WTC11 (cell line): ENCODE measurements at regions of chr15 and their contacts with region 1.

Region 1: DNA sequence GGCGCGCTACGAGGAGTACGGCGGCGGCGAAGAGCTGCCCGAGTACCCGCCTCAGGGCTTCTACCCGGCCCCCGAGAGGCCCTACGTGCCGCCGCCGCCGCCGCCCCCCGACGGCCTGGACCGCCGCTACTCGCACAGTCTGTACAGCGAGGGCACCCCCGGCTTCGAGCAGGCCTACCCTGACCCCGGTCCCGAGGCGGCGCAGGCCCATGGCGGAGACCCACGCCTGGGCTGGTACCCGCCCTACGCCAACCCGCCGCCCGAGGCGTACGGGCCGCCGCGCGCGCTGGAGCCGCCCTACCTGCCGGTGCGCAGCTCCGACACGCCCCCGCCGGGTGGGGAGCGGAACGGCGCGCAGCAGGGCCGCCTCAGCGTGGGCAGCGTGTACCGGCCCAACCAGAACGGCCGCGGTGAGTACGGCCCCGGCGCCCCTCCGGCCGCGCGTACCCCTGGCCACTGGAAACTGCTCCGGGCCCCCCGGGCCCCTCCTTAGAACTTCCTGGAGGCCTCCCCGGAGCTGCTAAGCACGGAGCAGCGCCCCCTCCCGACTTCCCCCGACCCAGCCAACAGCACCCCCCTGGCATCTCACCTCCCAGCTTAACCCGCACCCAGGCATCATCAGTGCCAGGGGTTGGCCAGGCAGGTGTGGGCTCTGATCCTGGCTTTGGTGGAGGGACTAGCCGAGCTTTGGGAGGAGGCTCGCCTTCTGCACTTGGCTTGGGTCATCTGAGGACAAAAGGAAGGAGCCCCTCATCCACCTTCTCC is 1.4 kb downstream of the LOXL1 start:
- DNase-seq: peak; percentile 74
- ATAC-seq: peak; percentile 38
- H3K4me3 Mint-ChIP-seq: peak overlapping the region; percentile 68
- H3K27ac Mint-ChIP-seq: no peak overlapping the region
- H3K4me1 Mint-ChIP-seq: peaks cover 43% of the 10 kb centered on the region
- H3K27me3 Mint-ChIP-seq: peaks cover 11% of the 10 kb centered on the region
- CTCF ChIP-seq: peak; percentile 33; the same call in 1 of the 2 replicates

Region 2: GRCh38 chr15:73897441-73898261 is 30.0 kb before region 1 on chr15:
- CTCF ChIA-PET with region 1: interaction called, 43 read pairs
- POLR2A ChIA-PET with region 1: interaction called, 3 read pairs
- DNase-seq: peak; percentile 78
- ATAC-seq: peak; percentile 92
- H3K4me3 Mint-ChIP-seq: no peak overlapping the region
- H3K27ac Mint-ChIP-seq: no peak overlapping the region
- H3K4me1 Mint-ChIP-seq: peaks cover 14% of the 10 kb centered on the region
- H3K27me3 Mint-ChIP-seq: no peaks in the 10 kb centered on the region
- CTCF ChIP-seq: peak; percentile 99

Region 3: GRCh38 chr15:73908030-73908821 is 19.4 kb before region 1 on chr15:
- CTCF ChIA-PET with region 1: interaction called, 20 read pairs
- POLR2A ChIA-PET with region 1: no interaction called
- DNase-seq: peak; percentile 95
- ATAC-seq: peak; percentile 99
- H3K4me3 Mint-ChIP-seq: no peak overlapping the region
- H3K27ac Mint-ChIP-seq: no peak overlapping the region
- H3K4me1 Mint-ChIP-seq: peaks cover 5% of the 10 kb centered on the region
- H3K27me3 Mint-ChIP-seq: peaks cover 7% of the 10 kb centered on the region
- CTCF ChIP-seq: peak; percentile 86

Region 4: DNA sequence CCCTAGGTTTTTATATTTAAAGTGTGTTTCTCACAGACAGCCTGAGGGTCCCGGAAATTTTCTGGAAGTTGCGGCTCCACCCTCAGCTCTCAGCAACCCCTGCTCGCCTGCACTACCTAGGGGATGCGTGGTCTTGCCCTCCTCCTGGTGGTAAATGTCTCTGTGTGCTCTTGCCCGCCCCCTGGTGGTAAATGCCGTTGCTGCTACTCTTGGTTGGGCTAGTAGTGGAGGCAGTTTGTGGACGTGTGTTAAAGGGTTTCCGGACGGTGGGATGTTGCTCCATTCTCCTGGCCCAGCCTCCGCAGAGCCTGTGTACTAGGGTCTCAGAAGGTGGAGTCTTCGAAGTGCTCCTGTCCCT is 37.1 kb after region 1 on chr15:
- CTCF ChIA-PET with region 1: interaction called, 17 read pairs
- POLR2A ChIA-PET with region 1: no interaction called
- DNase-seq: peak; percentile 94
- ATAC-seq: peak; percentile 96
- H3K4me3 Mint-ChIP-seq: peak overlapping the region; percentile 50
- H3K27ac Mint-ChIP-seq: no peak overlapping the region
- H3K4me1 Mint-ChIP-seq: peaks cover 27% of the 10 kb centered on the region
- H3K27me3 Mint-ChIP-seq: no peaks in the 10 kb centered on the region
- CTCF ChIP-seq: peak; percentile 91

Region 5: DNA sequence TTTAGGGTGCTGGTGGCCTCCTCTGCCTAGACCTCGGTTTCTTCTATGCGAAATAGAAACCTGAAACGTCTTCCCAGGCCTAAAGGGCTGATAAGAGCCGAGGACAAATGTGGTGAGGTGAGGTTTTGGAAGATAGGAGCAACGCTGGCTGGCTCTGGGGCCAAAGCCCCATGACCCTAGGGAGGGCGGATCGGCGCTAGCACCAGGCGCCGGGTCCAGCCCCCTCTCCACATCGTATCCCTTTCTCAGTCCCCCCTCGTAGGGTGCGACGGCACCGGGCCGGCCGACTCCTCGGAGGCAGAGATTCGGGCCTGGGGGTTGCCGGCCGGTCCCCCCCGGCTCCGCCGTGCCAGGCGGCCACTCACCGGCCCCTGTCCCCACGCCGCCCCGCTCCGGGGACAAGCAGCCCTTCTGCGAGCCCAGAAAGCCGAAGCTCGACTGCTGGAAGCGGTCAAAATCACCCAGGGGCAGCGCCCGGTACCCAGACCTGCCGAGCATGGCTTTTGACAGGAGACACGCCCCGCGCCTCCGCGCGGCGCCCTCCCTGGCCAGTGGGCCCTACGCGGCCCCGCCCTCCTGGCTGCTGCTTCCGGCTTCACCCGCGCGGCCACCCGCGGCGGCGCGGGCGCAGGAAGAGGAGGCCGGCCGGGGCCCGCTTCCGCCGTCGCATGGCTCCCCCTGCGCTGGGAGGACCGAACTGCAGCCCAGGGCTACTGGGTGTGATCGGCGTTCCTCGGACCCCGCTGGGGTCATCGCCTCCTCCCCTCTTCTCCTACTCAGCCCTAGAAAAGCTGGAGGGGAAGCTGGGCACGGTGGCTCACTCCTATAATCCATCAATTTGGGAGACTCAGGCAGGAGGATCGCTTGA is 64.3 kb after region 1 on chr15 and contains the start of gene STOML1:
- CTCF ChIA-PET with region 1: interaction called, 10 read pairs
- POLR2A ChIA-PET with region 1: interaction called, 7 read pairs
- DNase-seq: peak; percentile 97
- ATAC-seq: peak; percentile 68
- H3K4me3 Mint-ChIP-seq: peak within 1 kb of the TSS; percentile 74
- H3K27ac Mint-ChIP-seq: no peak within 1 kb of the TSS
- H3K4me1 Mint-ChIP-seq: peaks cover 30% of the 10 kb centered on the region
- H3K27me3 Mint-ChIP-seq: peaks cover 13% of the 10 kb centered on the region
- CTCF ChIP-seq: peak; percentile 81
- total RNA-seq, gene STOML1: 5.0 to 5.5 TPM (median 5.4 TPM) in 3 replicates

Region 6: GRCh38 chr15:74062671-74063070 is 135.0 kb after region 1 on chr15:
- CTCF ChIA-PET with region 1: no interaction called
- POLR2A ChIA-PET with region 1: no interaction called
- DNase-seq: no peak
- ATAC-seq: no peak
- H3K4me3 Mint-ChIP-seq: no peak overlapping the region
- H3K27ac Mint-ChIP-seq: no peak overlapping the region
- H3K4me1 Mint-ChIP-seq: peaks cover 6% of the 10 kb centered on the region
- H3K27me3 Mint-ChIP-seq: peaks cover 16% of the 10 kb centered on the region
- CTCF ChIP-seq: no peak

Region 7: DNA sequence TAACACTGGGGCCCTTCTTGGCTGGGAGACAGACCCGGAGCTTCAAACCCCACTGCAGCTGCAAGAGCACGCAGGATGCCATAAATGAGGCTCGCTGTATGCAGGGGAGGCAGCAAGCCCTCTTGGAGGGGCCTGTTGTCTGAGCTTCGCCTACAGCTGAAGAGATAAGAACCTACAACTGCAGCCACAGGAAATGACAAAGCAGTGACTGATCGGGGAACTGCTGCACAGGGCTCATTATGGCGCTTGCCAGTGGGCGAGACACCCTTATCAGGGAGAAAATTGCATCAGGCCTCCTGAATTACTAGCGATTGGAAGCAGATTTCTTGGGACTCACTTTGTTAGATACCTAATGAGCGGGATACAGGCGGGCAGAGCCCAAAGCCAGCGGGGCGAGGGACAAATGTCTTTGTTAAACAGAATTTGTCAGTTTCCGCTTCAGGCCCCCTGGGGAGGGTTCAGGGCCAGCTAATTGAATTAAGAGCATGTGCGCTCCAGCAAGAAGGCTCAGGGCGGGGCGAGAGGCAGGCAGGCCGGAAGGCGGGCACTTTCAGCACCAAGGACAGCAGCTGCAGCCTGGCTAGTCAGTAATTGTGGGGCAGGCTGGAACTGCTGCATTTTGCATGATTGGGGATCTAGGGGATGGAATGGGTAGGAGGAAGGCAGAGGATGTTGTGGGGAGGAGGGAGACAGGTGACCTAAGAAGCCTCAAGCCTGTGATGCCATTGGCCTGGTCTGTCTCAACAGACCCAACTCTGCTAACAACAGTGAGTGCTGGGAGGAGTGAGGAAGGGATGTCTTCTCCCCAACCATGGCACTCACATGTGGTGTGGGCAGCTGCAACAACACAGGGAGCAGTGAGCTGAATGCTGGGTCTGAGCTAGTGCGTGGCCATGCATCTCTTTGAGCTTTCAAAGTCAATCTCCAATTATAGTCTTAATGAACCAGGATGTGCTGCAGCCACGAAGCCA is 363.7 kb after region 1 on chr15:
- CTCF ChIA-PET with region 1: no interaction called
- POLR2A ChIA-PET with region 1: no interaction called
- DNase-seq: peak; percentile 99
- ATAC-seq: peak; percentile 88
- H3K4me3 Mint-ChIP-seq: peak overlapping the region; percentile 51
- H3K27ac Mint-ChIP-seq: no peak overlapping the region
- H3K4me1 Mint-ChIP-seq: peaks cover 23% of the 10 kb centered on the region
- H3K27me3 Mint-ChIP-seq: peaks cover 59% of the 10 kb centered on the region
- CTCF ChIP-seq: no peak